Cardiac septum (tissue), 1 donor: ENCODE measurements at regions of chr20 and their contacts with region 1.

Region 1: DNA sequence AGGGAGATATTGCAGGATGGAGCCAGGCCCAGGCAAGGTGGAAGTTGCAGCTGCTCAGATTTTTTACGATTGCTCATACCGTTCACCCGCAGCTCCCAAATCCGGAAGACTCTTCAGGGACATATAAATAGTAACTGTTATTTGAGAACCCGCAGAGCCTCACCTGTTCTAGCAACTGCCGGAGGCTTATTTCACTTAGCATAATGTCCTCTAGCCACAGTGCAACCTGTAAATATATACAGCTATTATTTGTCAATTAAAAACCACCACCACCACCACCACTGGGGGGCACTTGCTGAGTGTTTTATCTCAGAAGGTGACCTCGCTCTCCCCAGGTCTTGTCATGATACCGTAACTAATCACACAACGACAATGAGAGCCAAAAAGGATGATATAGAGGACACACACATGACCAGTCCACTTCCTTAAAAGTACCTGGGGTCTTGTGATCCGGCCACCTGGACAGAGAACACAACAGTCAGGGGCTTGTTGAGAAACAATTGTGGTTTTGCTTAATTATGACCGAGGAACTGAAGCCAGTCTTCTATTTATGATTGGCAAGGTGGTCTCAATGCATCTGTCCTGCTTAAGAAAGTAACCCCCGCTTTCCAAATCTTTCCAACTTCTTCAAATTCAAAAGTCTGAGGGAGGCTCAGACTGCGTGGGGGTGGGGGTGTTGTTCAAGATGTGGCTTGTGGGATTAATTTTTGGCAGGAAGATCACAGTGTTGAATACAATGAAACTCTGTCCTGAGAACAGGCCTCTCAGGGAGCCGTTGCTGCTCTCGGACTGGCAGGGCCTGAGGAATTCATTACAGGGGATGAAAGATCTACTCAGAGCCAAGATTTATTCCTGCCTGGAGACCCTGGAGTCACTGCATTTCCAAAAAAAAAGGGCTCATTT is 107.7 kb upstream of the PRND start:
- DNase-seq: no peak

Region 2: DNA sequence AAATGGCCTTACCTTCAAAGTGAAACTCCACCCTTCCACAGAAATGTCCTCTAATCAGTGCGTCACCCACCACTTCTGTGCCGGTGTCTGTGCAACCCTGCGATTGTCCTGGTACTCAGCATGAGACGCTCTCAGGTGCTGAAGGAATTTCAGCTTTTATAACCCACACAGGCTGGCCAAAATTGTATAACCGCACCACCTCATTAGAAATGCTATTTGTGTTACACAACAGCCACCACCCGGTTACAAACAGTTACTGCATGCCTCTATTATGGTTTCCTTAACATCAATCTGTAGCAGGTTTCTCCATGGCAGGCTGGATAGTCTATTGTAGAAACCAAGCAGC is 335.8 kb after region 1 on chr20:
- intact Hi-C with region 1: loop called (anchors 5 kb)
- DNase-seq: no peak